OCI-LY7 (cell line): ENCODE measurements at regions of chr3 and their contacts with region 1.

Region 1: GRCh38 chr3:98563661-98564281 is 29.6 kb downstream of the CPOX start:
- DNase-seq: peak; percentile 50
- H3K4me3 ChIP-seq: peak overlapping the region; percentile 36
- H3K27ac ChIP-seq: peak overlapping the region; percentile 86
- H3K4me1 ChIP-seq: peaks cover 64% of the 10 kb centered on the region
- CTCF ChIP-seq: no peak

Region 2: DNA sequence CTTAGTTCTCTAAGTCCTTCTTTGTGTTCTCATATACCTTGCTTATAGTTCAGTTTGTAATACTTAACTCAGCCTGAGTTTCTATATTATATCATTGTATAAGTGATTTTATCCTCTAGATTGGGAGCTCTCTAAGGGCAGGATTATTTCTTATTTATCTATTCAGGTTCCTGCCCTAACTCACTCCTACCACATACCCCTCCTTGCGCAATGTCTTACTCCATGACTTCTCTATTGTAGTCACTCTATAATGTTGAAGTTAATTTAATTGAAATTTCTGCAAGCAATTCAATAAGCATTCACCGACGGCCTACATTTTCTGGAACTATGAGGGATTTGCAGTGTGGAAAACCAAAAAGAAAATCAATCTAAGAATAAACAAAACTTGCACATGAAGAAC is 213.7 kb before region 1 on chr3:
- CTCF ChIA-PET with region 1: no interaction called
- POLR2A ChIA-PET with region 1: no interaction called
- intact Hi-C with region 1: no loop called
- DNase-seq: no peak
- H3K4me3 ChIP-seq: no peak overlapping the region
- H3K27ac ChIP-seq: no peak overlapping the region
- H3K4me1 ChIP-seq: no peaks in the 10 kb centered on the region
- CTCF ChIP-seq: no peak

Region 3: DNA sequence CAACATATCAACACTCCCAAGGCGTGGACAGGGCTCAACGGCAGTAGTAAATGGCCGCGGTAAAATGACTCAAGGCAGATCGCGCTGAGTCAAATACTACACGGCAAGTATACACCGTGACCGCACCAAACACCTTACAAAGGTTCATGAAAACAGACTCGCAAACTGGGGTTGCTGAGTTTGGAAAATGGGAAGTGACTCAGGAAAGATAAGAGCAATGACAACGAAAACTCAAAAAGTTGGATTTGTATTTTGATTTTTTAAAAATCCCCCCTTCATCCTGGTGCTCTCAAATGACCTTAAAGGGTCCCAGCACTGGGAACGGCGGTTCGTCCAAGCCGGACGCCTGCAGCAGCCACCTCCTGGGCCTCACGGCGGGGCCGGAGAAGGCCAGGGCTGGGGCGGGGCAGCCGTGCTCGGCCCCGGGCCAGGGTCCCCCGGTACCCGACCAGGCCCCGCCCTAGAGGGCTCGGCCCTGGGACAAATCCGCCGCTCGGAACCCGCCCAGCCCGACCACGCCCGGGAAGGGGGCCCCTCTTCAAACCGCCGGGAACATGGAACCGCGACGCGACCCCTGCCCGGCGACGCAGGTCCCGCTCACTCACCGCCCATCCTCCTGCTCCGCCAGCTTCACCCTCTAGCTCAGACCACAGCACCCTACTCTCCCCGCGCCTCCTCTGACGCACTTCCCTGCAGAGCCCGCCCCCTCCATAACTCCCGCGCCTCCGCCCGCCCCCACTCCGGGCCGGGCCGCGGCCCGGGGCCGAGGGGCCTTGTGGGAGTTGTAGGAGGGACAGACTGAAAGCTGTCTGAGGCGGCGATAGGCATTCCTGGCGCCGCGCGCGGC is 41.3 kb before region 1 on chr3 and contains the start of gene CLDND1:
- CTCF ChIA-PET with region 1: interaction called, 3 read pairs
- POLR2A ChIA-PET with region 1: interaction called, 13 read pairs
- intact Hi-C with region 1: loop called (anchors 2 kb)
- DNase-seq: peak; percentile 96
- H3K4me3 ChIP-seq: peak within 1 kb of the TSS; percentile 83
- H3K27ac ChIP-seq: peak within 1 kb of the TSS; percentile 17
- H3K4me1 ChIP-seq: peaks cover 29% of the 10 kb centered on the region
- CTCF ChIP-seq: no peak
- total RNA-seq, gene CLDND1: 70.7 and 78.0 TPM in 2 replicates

Region 4: DNA sequence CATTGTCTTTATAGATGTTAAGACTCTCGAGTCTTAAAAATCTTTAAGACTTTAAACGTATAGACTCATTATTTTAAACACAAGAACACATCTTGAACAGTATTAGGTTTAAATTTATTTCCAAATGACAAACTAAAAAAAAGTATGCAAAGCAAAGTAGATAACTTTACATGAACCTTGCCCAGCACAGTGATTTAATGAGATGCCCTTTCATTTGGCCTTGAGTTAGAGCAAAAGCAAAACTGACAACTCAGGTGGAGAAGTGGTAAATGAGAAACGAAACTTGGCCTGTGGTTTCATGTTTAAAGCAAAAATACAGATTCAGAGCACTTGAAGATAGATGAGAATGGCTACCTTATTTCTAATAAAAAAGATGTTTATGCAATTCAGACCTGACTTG is 23.4 kb before region 1 on chr3:
- CTCF ChIA-PET with region 1: interaction called, 9 read pairs
- POLR2A ChIA-PET with region 1: interaction called, 296 read pairs
- intact Hi-C with region 1: loop called (anchors 1 kb)
- DNase-seq: peak; percentile 85
- H3K4me3 ChIP-seq: peak overlapping the region; percentile 43
- H3K27ac ChIP-seq: peak overlapping the region; percentile 83
- H3K4me1 ChIP-seq: peaks cover 62% of the 10 kb centered on the region
- CTCF ChIP-seq: no peak

Region 5: GRCh38 chr3:98545940-98546339 is 17.8 kb before region 1 on chr3:
- CTCF ChIA-PET with region 1: interaction called, 3 read pairs
- POLR2A ChIA-PET with region 1: interaction called, 28 read pairs
- intact Hi-C with region 1: loop called (anchors 2 kb)
- DNase-seq: peak; percentile 41
- H3K4me3 ChIP-seq: peak overlapping the region; percentile 29
- H3K27ac ChIP-seq: no peak overlapping the region
- H3K4me1 ChIP-seq: peaks cover 37% of the 10 kb centered on the region
- CTCF ChIP-seq: no peak

Region 6: DNA sequence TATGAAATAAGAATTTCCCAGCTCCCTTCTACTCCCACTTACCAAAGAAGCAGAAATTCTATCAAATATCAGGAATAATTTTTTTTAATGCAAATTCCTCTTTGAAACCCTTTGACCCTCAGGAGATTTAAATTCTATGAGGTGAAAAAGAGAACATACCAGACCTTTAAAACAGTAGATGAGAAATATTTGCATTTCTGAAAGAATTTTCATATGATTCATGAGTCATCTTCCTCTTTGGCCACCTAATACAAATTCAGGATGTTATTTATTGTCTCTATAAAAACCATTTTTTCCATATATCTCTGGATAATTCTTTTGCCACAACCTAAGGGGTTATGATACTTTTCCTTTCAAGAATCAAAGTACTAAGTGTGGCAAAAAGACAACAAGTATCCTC is 132.0 kb after region 1 on chr3:
- CTCF ChIA-PET with region 1: no interaction called
- POLR2A ChIA-PET with region 1: no interaction called
- intact Hi-C with region 1: no loop called
- DNase-seq: no peak
- H3K4me3 ChIP-seq: no peak overlapping the region
- H3K27ac ChIP-seq: no peak overlapping the region
- H3K4me1 ChIP-seq: no peaks in the 10 kb centered on the region
- CTCF ChIP-seq: no peak

Region 7: GRCh38 chr3:98722389-98722788 is 158.6 kb after region 1 on chr3:
- CTCF ChIA-PET with region 1: no interaction called
- POLR2A ChIA-PET with region 1: no interaction called
- intact Hi-C with region 1: no loop called
- DNase-seq: no peak
- H3K4me3 ChIP-seq: no peak overlapping the region
- H3K27ac ChIP-seq: no peak overlapping the region
- H3K4me1 ChIP-seq: no peaks in the 10 kb centered on the region
- CTCF ChIP-seq: no peak

Region 8: DNA sequence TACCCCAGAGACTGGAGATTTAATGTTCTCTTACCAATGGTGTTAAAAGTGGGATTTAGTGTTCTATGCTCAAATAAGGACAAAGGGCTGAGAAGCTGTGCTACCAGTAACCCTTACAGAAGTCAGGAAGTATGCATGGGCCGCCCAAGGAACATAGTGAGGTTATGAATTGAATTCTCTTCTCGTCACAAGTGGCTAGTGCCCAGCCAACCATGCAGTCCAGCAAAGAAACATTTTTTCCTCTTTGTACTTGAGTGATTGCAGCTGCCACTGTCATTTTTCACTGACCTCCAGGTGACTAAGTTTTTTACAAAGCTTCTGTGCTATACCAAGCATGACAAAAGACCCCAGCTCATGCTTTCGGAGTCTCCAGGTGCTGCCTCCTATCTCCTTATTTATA is 448.3 kb after region 1 on chr3:
- CTCF ChIA-PET with region 1: no interaction called
- POLR2A ChIA-PET with region 1: interaction called, 5 read pairs
- intact Hi-C with region 1: loop called (anchors 5 kb)
- DNase-seq: peak; percentile 96
- H3K4me3 ChIP-seq: peak overlapping the region; percentile 54
- H3K27ac ChIP-seq: peak overlapping the region; percentile 96
- H3K4me1 ChIP-seq: peaks cover 71% of the 10 kb centered on the region
- CTCF ChIP-seq: no peak; the same call in 1 of the 2 replicates